Dorsolateral prefrontal cortex (tissue), 120 donors: ENCODE measurements at regions of chr3 and their contacts with region 1.

Region 1: GRCh38 chr3:192433704-192434103 is 293.6 kb downstream of the FGF12 start:
- DNase-seq: no peak
- H3K4me3 ChIP-seq: no peak overlapping the region
- H3K27ac ChIP-seq: peak overlapping the region in 1 of 59 donors; percentile 36
- H3K27me3 ChIP-seq: peaks cover 0 to 5% (median 0%) of the 10 kb centered on the region in 45 donors
- CTCF ChIP-seq: no peak

Region 2: GRCh38 chr3:192130534-192131132 is 303.1 kb before region 1 on chr3:
- intact Hi-C with region 1: loop called in 1 of 2 experiments (anchors 10 kb)
- DNase-seq: peak; percentile 20 to 74 (median 48)
- H3K4me3 ChIP-seq: no peak overlapping the region
- H3K27ac ChIP-seq: no peak overlapping the region
- H3K27me3 ChIP-seq: peaks cover 0 to 2% (median 0%) of the 10 kb centered on the region in 45 donors
- CTCF ChIP-seq: peak; percentile 62 to 87 (median 78)

Region 3: GRCh38 chr3:192467230-192468140 is 33.8 kb after region 1 on chr3:
- intact Hi-C with region 1: no loop called
- DNase-seq: peak in 8 of 10 donors; percentile 51 to 75 (median 56)
- H3K4me3 ChIP-seq: peak overlapping the region in 3 of 59 donors; percentile 13 to 29 (median 19)
- H3K27ac ChIP-seq: peak overlapping the region in 2 of 59 donors; percentile 2 to 11
- H3K27me3 ChIP-seq: peaks cover 0 to 10% (median 0%) of the 10 kb centered on the region in 45 donors
- CTCF ChIP-seq: peak; percentile 71 to 93 (median 86)

Region 4: DNA sequence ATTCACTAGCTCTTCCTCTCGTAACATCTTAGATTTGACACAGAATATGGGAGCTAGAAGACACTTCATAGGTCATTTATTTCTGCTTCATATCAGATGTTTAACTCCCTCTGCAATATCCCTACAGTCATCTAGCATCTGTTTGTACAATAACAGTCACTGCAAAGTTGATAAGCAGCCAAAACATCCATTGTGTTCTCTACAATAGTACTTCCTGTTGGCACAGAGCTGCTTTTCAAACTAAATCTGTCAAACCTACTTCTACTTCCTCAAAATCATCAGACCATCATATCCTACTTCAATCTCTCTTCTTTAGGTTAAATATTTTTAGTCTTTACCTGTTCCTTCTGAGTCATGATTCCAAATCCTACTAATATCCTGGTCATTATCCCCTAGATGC is 60.5 kb after region 1 on chr3:
- intact Hi-C with region 1: no loop called
- DNase-seq: no peak
- H3K4me3 ChIP-seq: no peak overlapping the region
- H3K27ac ChIP-seq: no peak overlapping the region
- H3K27me3 ChIP-seq: no peaks in the 10 kb centered on the region
- CTCF ChIP-seq: no peak